ENCODE measurements at regions of chr2 and their contacts with region 1.

Region 1: DNA sequence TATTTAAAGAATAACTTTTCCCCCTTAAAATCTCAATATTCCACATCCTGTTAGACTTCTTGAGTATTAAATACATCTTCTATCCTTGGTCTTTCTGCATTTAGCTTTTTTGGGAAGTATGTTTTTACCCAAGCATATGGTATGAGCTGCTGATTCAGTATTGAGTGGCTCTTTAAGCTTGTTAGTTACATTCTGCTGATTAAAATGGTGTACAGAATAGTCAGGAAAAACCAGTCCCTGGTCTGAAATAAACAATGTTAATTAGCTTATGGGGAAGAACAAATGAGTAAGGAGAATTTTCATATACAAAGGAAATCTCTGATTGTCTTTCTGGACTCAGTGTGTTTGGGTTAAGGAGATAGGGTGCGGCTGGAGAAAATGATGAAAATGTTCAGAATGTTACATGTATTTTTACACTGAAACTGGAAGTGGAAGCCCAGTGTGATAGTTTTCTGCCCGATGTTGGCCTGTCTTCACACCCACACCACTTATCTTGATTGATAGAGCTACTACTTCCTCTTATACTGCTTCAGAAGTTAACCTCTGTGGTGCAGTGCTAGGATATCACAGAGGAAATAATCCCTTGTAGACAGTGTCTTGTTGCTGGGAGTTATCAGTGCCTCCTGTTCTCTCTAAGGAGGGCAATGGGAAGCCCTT is 84.0 kb downstream of the MSH2 start:
- DNase-seq: no peak
- H3K4me3 ChIP-seq: no peak overlapping the region
- H3K27ac ChIP-seq: no peak overlapping the region
- H3K4me1 ChIP-seq: peaks cover 15% of the 10 kb centered on the region
- H3K27me3 ChIP-seq: no peaks in the 10 kb centered on the region
- CTCF ChIP-seq: no peak

Region 2: GRCh38 chr2:47653902-47654789 is 167.2 kb after region 1 on chr2:
- CTCF ChIA-PET with region 1: interaction called, 10 read pairs
- POLR2A ChIA-PET with region 1: interaction called, 22 read pairs
- intact Hi-C with region 1: no loop called
- DNase-seq: peak; percentile 59 to 61
- H3K4me3 ChIP-seq: no peak overlapping the region
- H3K27ac ChIP-seq: 0 out of 2 replicates have a peak overlapping the region, but pooled peaks have one; percentile 5
- H3K4me1 ChIP-seq: peaks cover 41% of the 10 kb centered on the region
- H3K27me3 ChIP-seq: no peaks in the 10 kb centered on the region
- CTCF ChIP-seq: peak; percentile 57; the same call in 1 of the 2 replicates

Measured in PC-9 (cell line).